Common myeloid progenitor, CD34-positive (primary cell): ENCODE measurements at regions of chr4 and their contacts with region 1.

Region 1: GRCh38 chr4:77418333-77419038 is 187.1 kb upstream of the CXCL13 start:
- DNase-seq: peak; percentile 31 to 64 (median 60)
- H3K4me3 ChIP-seq: no peak overlapping the region
- H3K27ac ChIP-seq: no peak overlapping the region
- H3K4me1 ChIP-seq: no peaks in the 10 kb centered on the region
- H3K27me3 ChIP-seq: peaks cover 0 to 13% (median 3%) of the 10 kb centered on the region in 5 experiments

Region 2: DNA sequence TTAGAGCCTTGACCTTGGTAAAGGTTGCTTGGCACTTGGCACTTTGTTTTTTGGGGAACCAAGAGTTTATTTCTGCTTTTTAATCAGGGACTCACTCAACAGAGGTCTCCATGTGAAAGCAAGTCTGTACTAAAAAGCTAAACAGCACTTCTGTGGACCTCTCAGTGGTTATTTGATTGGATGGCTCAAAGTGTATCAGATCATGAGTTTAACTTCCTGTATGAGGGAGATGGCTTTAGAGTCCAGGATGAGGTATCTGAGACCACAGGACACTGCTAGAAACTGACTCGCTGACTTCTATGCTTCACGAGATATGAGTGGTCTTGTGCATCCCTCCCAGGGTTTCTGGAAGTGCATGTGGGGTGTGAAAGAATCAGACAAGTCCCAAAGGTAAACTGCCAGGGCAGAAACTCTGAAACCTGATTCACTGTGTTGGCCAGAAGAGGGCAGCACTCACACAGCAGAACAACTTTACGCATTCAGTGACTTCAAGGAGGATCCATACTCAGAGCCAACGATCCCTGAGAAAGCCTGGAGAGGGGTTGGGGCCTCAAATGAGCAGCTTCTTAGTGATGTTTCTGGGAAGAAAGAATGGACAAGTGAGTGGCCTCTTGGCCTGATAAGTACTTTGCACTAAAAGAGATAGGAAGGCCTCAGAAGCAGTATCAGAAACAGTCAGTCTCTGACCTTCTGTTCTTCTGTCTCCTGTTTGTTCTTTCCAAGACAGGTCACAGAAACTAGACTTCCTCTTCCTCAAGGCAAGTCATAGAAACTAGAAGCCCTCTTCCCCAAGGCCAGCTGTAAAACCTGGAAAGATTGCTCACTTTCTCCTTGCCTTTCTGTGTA is 33.1 kb before region 1 on chr4:
- CTCF ChIA-PET with region 1: interaction called, 26 read pairs
- POLR2A ChIA-PET with region 1: interaction called, 3 read pairs
- DNase-seq: peak; percentile 63 to 78 (median 71)
- H3K4me3 ChIP-seq: no peak overlapping the region
- H3K27ac ChIP-seq: no peak overlapping the region
- H3K4me1 ChIP-seq: no peaks in the 10 kb centered on the region
- H3K27me3 ChIP-seq: peaks cover 0 to 2% (median 0%) of the 10 kb centered on the region in 5 experiments

Region 3: GRCh38 chr4:77433418-77433733 is 14.9 kb after region 1 on chr4:
- CTCF ChIA-PET with region 1: interaction called, 17 read pairs
- POLR2A ChIA-PET with region 1: no interaction called
- DNase-seq: peak; percentile 70 to 85 (median 83)
- H3K4me3 ChIP-seq: peak overlapping the region in 2 of 7 experiments; percentile 1 to 25
- H3K27ac ChIP-seq: no peak overlapping the region
- H3K4me1 ChIP-seq: peaks cover 0 to 8% (median 2%) of the 10 kb centered on the region in 4 experiments
- H3K27me3 ChIP-seq: peaks cover 0 to 2% (median 0%) of the 10 kb centered on the region in 5 experiments